ENCODE measurements at regions of chr3 and their contacts with region 1.

Region 1: DNA sequence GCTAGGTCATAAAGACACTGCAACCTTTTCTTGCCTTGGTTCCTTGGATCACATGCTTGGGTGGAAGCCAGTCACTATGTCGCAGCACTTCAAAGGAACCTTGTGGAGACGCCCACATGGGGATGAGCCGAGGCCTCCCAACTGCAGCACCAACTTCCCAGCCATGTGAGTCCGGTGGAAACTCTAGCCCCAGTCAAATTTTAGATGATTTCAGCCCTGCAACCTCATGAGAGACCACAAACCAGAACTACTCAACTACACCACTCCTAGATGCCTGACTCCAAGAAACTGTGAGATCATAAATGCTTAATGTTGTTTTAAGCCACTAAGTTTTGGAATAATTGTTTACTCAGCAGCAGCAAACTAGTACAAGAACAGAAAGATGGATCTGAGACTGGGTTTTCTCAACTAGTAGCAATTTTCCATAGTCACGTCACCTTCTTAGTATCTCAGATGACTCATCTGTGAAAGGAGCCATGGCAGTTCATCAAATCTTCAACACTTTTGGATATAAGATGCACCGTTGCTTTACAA is 86.5 kb downstream of the MB21D2 start:
- DNase-seq: no peak
- ATAC-seq: no peak

Region 2: DNA sequence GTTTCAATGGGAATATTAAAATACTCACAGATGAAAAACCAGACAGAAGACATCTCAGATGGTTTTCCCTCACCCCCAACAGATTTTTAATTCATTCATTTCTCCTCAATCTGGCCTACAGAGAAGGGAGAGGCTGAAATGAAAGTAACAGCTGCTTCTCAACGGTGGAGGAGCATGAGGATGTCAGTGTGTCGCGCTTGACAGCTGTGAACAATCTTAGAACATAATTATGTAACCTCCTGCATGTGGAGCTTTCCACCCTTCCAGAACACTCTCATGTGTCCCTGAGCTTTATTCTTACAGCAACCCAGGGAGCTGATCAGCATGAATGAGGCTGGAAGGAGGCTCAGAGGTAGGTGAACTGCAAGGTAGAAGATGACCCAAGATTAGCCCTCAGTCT is 33.8 kb after region 1 on chr3:
- intact Hi-C with region 1: loop called (anchors 5 kb)
- DNase-seq: no peak
- ATAC-seq: peak; percentile 78

Measured in Right ventricle myocardium inferior (tissue), 1 donor.